OCI-LY7 (cell line): ENCODE measurements at regions of chr16 and their contacts with region 1.

Region 1: GRCh38 chr16:4425378-4426020 is at the start of gene DNAJA3:
- DNase-seq: peak; percentile 97
- H3K4me3 ChIP-seq: peak within 1 kb of the TSS; percentile 90
- H3K27ac ChIP-seq: peak within 1 kb of the TSS; percentile 88
- H3K4me1 ChIP-seq: peaks cover 23% of the 10 kb centered on the region
- CTCF ChIP-seq: no peak
- total RNA-seq, gene DNAJA3: 89.8 and 94.5 TPM in 2 replicates

Region 2: DNA sequence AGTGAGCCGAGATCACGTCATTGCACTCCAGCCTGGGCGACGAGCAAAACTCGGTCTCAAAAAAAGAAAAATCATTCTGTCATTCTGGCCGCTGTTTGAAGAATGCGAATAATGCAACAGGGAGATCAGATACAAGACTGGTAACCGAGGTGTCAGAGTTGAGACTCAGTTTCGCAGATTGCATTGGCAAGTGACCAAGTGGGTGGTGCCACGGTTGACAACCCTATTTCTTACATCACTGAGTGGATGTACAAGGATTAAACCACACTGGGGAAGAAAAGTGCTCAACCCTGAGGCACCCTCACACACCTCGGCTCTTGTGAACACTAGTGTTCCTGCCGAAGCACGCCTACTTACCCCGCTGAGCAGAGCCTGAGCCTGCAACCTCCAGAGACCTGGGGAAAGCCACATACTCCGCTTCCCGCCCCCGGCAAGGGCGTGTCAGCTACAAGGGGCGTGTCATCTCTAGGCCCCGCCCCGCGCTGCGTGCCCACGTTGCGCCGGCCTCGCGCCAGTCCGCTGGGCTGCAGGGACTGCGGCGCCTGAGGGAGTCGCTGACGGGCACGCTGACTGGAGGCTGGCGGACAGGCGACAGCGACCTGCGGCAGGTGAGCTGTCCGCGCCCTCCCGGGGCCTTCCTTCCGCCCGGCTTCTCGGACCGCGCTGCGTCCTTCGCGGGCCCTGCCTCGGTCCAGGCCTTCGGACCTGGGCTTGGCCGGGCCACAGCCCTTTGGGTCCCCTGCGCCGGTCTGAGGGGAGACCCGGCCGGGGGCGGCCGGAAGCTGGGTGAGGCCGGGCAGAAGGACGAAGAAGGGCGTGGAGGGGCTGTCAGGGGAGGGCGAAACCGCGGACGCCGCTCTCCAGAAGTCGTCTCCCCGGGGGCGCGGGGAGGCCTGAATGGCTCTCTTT is 50.6 kb after region 1 on chr16 and contains the start of gene HMOX2:
- CTCF ChIA-PET with region 1: no interaction called
- POLR2A ChIA-PET with region 1: interaction called, 5 read pairs
- intact Hi-C with region 1: loop called (anchors 1 kb)
- DNase-seq: peak; percentile 96
- H3K4me3 ChIP-seq: peak within 1 kb of the TSS; percentile 97
- H3K27ac ChIP-seq: peak within 1 kb of the TSS; percentile 78
- H3K4me1 ChIP-seq: peaks cover 34% of the 10 kb centered on the region
- CTCF ChIP-seq: peak; percentile 62
- total RNA-seq, gene HMOX2: 46.0 and 55.2 TPM in 2 replicates

Region 3: GRCh38 chr16:4593069-4593468 is 167.6 kb after region 1 on chr16:
- CTCF ChIA-PET with region 1: no interaction called
- POLR2A ChIA-PET with region 1: no interaction called
- intact Hi-C with region 1: no loop called
- DNase-seq: no peak
- H3K4me3 ChIP-seq: no peak overlapping the region
- H3K27ac ChIP-seq: no peak overlapping the region
- H3K4me1 ChIP-seq: no peaks in the 10 kb centered on the region
- CTCF ChIP-seq: no peak

Region 4: DNA sequence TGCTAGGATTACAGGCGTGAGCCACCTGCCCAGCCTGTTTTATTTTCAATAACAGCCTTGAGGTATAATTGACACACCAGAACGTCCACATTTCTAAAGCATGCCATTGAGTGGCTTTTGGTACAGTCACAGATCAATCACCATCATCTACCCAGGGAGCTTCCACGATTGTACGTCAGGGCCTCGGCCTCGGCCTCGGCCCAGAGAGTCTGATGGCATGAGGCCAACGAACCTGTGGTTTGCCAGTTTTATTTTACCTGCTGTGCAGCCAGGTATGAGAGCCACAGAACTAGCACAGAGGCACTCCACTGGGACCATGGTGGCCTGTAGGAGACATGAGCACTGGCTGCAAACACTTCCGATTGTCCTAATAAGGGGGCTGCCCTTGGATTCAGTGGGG is 180.9 kb after region 1 on chr16:
- CTCF ChIA-PET with region 1: no interaction called
- POLR2A ChIA-PET with region 1: no interaction called
- intact Hi-C with region 1: no loop called
- DNase-seq: no peak
- H3K4me3 ChIP-seq: no peak overlapping the region
- H3K27ac ChIP-seq: no peak overlapping the region
- H3K4me1 ChIP-seq: no peaks in the 10 kb centered on the region
- CTCF ChIP-seq: no peak